Common myeloid progenitor, CD34-positive (primary cell): ENCODE measurements at regions of chrX and their contacts with region 1.

Region 1: GRCh38 chrX:119729408-119730201 is 28.8 kb upstream of the SOWAHD start:
- DNase-seq: peak; percentile 59 to 82 (median 76)
- H3K4me3 ChIP-seq: peak overlapping the region in 1 of 7 experiments; percentile 16
- H3K27ac ChIP-seq: no peak overlapping the region
- H3K4me1 ChIP-seq: peaks cover 0 to 5% (median 1%) of the 10 kb centered on the region in 4 experiments
- H3K27me3 ChIP-seq: no peaks in the 10 kb centered on the region

Region 2: DNA sequence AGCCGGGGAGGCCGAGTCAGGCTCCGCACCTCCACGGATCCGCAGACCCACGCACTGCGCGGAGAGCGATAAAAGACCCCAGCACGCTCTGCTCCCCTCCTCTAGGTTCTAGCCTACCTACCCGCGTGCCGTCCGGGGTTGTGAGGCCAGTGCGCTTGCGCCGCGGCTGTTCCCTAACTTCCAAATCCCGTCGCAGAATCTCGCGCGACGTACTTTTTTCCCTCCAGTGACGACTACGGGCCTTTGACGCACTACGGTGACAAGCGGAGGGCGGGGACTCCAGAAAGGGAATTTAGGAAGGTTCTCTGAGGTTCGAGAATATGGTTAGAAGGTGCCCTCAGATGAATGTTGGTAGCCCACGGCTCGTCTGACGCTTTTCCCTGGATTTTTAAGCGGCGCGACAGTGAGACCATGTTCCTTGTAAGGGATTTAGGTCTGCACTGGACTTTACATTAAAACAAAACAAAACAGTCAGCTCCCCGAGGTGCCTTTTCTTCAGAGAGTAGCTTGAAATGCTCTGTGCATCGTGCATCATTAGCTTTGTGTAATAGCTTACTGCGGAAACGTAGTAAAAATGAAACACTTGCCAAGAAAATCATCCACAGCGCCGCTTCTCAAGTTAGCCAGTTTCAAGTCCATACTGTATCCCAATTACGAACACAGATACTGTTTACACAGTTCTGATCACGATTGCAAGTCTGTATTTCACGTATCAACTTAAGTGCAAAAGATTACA is 123.2 kb before region 1 on chrX and contains the start of gene NKRF:
- CTCF ChIA-PET with region 1: no interaction called
- POLR2A ChIA-PET with region 1: no interaction called
- DNase-seq: peak; percentile 92 to 96 (median 95)
- H3K4me3 ChIP-seq: peak within 1 kb of the TSS; percentile 53 to 88 (median 74)
- H3K27ac ChIP-seq: peak within 1 kb of the TSS; percentile 74 to 91
- H3K4me1 ChIP-seq: peaks cover 0 to 18% (median 9%) of the 10 kb centered on the region in 4 experiments
- H3K27me3 ChIP-seq: peaks cover 0 to 11% (median 0%) of the 10 kb centered on the region in 5 experiments

Region 3: DNA sequence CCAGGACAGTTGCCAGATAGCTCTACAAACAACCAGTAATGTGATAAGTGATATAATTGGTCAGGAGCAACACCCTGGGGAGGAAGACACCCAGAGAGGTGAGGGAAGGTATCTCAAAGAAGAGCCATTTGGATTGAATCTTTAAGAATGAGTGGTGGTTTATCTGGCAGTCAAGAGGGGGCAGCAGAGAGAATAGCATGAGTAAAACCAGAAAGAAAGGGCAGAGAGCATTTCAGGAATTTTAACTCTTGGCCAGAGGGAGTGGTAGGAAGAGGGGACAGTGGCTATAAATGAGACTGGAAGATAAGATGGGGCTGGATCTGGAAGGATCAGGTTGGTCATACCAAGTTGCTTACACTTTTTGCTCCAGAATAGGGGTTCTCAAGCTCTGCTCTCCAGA is 30.8 kb before region 1 on chrX:
- CTCF ChIA-PET with region 1: interaction called, 12 read pairs
- POLR2A ChIA-PET with region 1: no interaction called
- DNase-seq: peak; percentile 54 to 80 (median 73)
- H3K4me3 ChIP-seq: no peak overlapping the region
- H3K27ac ChIP-seq: no peak overlapping the region
- H3K4me1 ChIP-seq: peaks cover 0 to 13% (median 11%) of the 10 kb centered on the region in 4 experiments
- H3K27me3 ChIP-seq: no peaks in the 10 kb centered on the region